Naive thymus-derived CD4-positive, alpha-beta T cell (primary cell): ENCODE measurements at regions of chrX and their contacts with region 1.

Region 1: DNA sequence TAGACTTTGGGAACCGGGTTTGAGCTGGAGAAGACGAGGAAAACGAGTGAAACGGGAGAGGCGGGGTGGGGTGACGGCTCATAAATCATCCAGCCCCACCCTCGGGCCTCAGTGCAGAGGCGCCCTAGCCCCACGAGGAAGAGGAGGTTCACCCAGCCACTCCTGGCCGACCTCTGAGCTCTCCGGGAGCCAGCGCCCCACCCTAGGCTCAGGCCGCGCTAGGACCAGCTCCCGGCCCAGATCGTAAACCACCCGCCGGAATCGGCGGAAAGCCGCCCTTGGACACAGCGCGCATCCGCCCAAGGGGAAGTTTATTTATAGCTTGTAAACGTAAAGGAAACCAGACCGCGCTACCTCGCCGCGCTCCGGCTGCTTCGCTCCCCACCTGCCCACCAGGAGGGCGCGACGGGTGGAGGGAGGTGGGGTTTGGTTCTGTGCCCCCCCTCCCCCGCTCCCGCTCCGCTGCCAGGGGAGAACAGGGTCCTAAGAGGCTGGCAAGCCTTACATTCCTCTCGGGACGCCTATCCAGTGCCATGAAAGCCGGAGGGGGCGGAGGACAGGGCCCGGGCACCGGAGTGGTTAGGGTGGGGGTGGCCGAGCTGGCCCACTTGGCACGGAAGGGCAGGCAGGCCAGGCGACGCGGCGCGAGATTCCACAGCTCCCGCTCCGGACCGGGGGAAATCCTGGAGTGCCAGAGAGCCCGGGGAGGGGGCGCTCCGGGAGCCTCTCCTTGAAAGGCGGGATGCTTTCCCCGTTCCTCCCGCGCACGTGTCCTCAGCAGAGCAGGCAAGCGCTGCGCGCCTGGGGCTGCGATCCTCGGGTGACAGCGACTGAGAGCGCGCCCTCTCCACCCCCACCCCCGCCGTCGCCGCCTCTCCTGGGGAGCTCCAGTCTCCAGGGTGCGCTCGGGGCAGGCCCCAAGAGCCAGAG is 84.2 kb downstream of the BCOR start:
- DNase-seq: peak in 2 of 9 donors; percentile 18 to 53
- ATAC-seq: peak; percentile 42
- H3K4me3 ChIP-seq: peak overlapping the region; percentile 51
- H3K4me3 Mint-ChIP-seq: peak overlapping the region; percentile 70 to 87 (median 75)
- H3K27ac ChIP-seq: no peak overlapping the region
- H3K27ac Mint-ChIP-seq: peak overlapping the region in 2 of 9 donors; percentile 43 to 83
- H3K4me1 ChIP-seq: peaks cover 0 to 31% of the 10 kb centered on the region in 2 donors
- H3K4me1 Mint-ChIP-seq: peaks cover 5 to 35% (median 24%) of the 10 kb centered on the region in 7 donors
- H3K27me3 ChIP-seq: no peaks in the 10 kb centered on the region
- H3K27me3 Mint-ChIP-seq: peaks cover 0 to 24% (median 0%) of the 10 kb centered on the region in 5 donors

Region 2: DNA sequence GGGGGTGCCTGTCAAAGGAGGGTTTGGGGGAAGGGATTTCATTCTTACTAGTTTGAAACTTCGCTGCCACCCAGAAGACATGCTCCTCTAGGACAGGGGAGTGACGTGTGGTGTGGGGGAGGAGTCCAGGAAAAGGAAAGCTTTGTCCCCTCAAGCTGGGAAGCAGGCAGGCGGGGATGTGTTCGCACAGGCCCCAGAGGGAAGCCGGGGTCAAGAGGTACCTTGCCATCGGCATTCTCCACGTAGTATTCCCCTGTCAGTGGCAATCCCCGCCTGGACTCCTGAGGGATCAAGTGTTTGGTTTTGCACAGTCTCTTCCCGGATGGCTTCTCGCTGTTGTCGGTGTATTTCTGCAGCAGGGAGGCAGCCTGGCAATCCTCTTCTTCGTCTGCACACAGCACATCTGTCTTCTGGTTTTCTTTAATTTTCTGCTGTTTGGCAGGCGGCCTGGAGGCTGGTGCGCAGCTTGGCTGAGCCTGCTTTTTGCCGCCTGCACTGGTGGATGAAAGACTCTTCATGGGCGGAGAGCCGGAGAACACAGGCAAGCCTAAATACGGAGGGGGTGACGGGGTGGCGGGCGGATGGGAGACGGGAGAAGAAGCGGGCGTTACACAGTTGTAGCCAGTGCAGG is 49.1 kb after region 1 on chrX:
- CTCF ChIA-PET with region 1: no interaction called
- POLR2A ChIA-PET with region 1: no interaction called
- intact Hi-C with region 1: loop called (anchors 1 to 5 kb)
- DNase-seq: no peak
- ATAC-seq: no peak
- H3K4me3 ChIP-seq: no peak overlapping the region
- H3K4me3 Mint-ChIP-seq: peak overlapping the region in 2 of 10 donors; percentile 25 to 41
- H3K27ac ChIP-seq: no peak overlapping the region
- H3K27ac Mint-ChIP-seq: peak overlapping the region in 7 of 9 donors; percentile 33 to 97 (median 74)
- H3K4me1 ChIP-seq: peaks cover 0 to 37% of the 10 kb centered on the region in 2 donors
- H3K4me1 Mint-ChIP-seq: peaks cover 17 to 59% (median 48%) of the 10 kb centered on the region in 7 donors
- H3K27me3 ChIP-seq: no peaks in the 10 kb centered on the region
- H3K27me3 Mint-ChIP-seq: no peaks in the 10 kb centered on the region

Region 3: DNA sequence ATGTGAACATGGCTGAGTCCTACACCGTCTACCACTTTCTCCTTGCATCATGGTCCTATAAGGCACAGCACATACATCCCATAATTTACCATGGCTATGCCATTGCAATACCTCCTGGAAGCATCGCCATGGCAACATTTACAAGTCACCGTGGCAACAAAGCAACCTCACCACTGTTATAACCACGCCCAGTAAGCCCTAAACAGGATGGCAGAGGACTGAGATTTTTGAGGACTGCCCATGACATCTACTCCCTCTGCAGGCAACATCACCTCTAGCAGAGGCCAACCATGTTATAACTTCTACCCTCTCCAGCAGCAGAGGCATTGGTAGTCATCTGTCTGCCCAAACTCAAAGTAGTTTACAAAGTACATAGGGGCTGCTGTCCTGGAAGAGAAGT is 54.5 kb after region 1 on chrX:
- CTCF ChIA-PET with region 1: no interaction called
- POLR2A ChIA-PET with region 1: interaction called, 3 read pairs
- intact Hi-C with region 1: loop called in 1 of 2 experiments (anchors 5 kb)
- DNase-seq: peak in 2 of 9 donors; percentile 35 to 39
- ATAC-seq: peak; percentile 75
- H3K4me3 ChIP-seq: no peak overlapping the region
- H3K4me3 Mint-ChIP-seq: peak overlapping the region in 2 of 10 donors; percentile 11 to 12
- H3K27ac ChIP-seq: no peak overlapping the region
- H3K27ac Mint-ChIP-seq: peak overlapping the region in 8 of 9 donors; percentile 19 to 81 (median 40)
- H3K4me1 ChIP-seq: peaks cover 0 to 33% of the 10 kb centered on the region in 2 donors
- H3K4me1 Mint-ChIP-seq: peaks cover 22 to 71% (median 65%) of the 10 kb centered on the region in 7 donors
- H3K27me3 ChIP-seq: no peaks in the 10 kb centered on the region
- H3K27me3 Mint-ChIP-seq: no peaks in the 10 kb centered on the region